Heart right ventricle (tissue), 16 donors: ENCODE measurements at regions of chr19 and their contacts with region 1.

Region 1: DNA sequence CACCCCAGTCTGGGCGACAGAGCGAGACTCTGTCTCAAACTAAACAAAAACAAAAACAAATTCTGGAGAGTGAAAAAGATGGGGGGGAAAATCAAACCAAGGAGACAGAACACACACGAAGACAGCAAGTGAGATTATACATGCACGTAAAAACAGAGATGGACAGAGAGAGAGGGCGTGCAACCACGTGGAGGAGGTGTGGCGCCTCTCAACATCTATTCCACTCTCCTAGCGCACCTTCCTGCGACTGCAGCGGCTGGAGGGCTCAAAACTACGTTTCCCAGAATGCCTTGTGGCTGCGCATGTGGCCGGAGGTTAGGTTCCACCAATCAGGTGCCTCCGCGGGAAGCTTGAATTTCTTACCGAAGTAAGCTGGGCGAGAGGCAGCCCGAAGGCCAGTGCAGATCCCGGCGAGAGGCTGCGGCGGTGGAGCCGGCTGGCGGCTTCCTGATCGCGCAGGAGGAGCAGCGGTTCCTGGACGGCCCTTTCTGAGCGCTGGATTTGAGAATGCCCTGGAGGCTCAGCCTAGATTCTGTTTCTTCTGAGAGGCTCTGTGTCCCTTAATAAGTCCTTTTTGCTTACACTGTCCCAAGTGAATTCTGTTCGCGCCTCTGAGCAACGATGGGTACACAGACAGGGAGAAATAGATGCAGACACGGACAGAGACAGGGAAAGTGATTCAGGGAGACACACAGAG is 13.1 kb upstream of the NANOS2 start:
- DNase-seq: peak; percentile 86 to 90
- ATAC-seq: peak; percentile 82 to 95 (median 94)
- H3K4me3 ChIP-seq: peak overlapping the region in 1 of 10 donors; percentile 24
- H3K27ac ChIP-seq: no peak overlapping the region
- H3K4me1 ChIP-seq: peaks cover 0 to 9% (median 6%) of the 10 kb centered on the region in 9 donors
- H3K27me3 ChIP-seq: peaks cover 0 to 9% (median 0%) of the 10 kb centered on the region in 7 donors
- CTCF ChIP-seq: peak in 4 of 9 donors; percentile 14 to 22 (median 20)

Region 2: DNA sequence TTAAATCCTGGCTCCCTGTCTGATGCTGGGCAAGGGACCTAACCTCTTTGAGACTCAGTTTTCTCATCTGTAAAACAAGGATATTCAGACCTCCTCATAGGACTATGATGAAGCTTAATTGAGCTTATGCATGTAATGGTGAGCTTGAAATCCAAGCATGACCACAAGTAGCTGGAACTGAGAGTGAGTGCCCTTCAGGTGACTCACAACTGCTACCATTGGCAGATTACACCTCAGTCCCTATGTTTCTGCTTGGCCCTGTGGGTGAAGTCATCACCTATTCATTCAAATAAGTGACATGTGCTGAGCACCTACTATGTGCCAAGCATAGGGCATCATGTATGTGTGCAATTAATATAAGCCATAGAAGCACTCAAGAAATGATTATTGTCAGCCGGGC is 20.2 kb after region 1 on chr19:
- intact Hi-C with region 1: no loop called
- DNase-seq: no peak
- ATAC-seq: no peak
- H3K4me3 ChIP-seq: no peak overlapping the region
- H3K27ac ChIP-seq: no peak overlapping the region
- H3K4me1 ChIP-seq: peaks cover 3 to 6% (median 4%) of the 10 kb centered on the region in 9 donors
- H3K27me3 ChIP-seq: peaks cover 0 to 24% (median 0%) of the 10 kb centered on the region in 7 donors
- CTCF ChIP-seq: no peak

Region 3: DNA sequence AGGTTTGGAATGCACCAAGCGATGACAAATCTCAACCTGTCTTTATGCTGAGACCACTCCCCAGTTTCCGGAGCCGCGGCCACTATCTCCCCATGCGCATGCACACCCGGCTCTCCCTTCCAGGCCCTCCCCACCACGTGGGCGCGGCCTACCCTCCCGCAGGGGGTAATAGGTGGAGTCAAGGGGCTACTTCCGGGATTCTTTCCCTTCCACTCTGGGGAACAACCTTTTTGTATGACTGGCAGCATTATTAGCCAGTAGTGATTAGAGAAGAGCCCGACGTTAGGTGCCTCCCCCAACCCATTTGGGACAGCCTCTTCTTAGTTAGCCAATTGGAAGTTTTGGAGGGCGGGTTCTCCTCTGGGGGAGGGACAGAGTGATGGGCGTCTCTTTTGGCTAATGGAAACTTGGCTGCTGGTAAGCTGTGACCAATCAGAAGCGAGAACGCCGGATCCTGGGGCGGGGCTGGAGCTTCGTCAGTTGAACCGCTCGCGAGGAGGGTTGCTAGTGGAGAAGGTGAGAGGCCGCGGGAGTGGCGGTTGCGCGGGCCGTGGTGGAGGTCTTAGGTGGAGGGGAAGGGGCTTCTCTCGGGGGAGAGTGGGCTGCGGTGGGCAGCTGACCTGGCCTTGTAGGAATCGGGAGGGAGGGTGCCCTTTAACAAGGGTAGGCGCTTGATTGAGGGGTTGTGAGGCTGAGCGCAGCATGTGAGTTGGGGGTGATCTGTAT is 67.4 kb after region 1 on chr19 and contains the start of gene CCDC61:
- intact Hi-C with region 1: loop called in 1 of 10 experiments (anchors 5 kb)
- DNase-seq: peak; percentile 90 to 98
- ATAC-seq: peak; percentile 98 to 100 (median 99)
- H3K4me3 ChIP-seq: peak within 1 kb of the TSS; percentile 61 to 94 (median 79)
- H3K27ac ChIP-seq: peak within 1 kb of the TSS in 9 of 10 donors; percentile 3 to 91 (median 81)
- H3K4me1 ChIP-seq: peaks cover 3 to 24% (median 17%) of the 10 kb centered on the region in 9 donors
- H3K27me3 ChIP-seq: peaks cover 0 to 15% (median 0%) of the 10 kb centered on the region in 7 donors
- CTCF ChIP-seq: no peak
- total RNA-seq, gene CCDC61: 6.6 to 10.3 (median 8.3) TPM

Region 4: DNA sequence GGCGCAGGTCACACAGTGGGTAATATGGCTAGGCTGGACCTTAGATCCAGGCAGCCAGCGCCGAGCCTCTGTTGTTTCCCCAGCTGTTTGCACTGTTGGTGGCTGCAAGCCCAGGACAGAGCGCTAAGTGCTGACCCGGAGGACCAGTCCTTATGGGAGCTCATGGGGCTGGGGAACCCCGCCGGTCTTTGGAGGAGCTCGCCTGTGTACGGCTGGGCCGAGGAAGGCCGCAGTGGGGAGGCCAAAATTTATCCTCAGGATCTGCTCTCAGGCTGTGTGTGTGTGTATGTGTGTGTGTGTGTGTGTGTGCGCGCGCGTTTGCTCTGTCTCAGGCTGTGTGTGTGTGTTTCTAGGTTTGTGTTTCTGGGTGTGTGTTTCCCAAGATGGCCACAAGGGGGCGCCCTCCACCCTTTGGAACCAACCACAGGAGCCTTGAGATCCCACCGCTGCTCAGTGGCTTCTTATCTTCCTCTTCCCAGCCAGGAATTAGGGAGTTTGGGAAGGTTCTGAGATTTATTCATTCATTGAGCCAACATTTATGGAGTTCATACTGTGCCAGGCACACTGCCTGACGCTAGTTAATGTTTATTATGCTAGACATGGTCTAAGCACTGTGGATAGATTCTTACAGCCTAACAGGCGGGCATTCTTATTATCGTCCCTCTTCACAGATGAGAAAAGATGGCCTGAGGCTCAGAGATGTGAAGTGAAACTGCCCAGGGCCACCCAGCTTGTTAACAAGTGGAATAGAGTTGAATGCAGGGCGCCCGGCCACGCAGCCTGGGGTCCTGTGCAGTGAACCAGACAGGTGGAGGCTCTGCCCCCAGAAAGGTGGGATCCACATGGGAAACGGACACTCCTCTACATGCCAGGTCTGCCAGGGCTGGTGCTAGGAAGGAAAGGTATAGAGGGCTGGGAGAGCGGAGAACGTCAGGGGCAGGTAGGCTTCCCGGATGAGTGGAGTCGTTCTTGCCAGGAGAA is 82.1 kb after region 1 on chr19:
- intact Hi-C with region 1: loop called in 4 of 10 experiments (anchors 5 to 10 kb)
- DNase-seq: peak; percentile 64 to 65
- ATAC-seq: peak; percentile 60 to 87 (median 80)
- H3K4me3 ChIP-seq: no peak overlapping the region
- H3K27ac ChIP-seq: no peak overlapping the region
- H3K4me1 ChIP-seq: peaks cover 0 to 10% (median 5%) of the 10 kb centered on the region in 9 donors
- H3K27me3 ChIP-seq: peaks cover 0 to 31% (median 21%) of the 10 kb centered on the region in 7 donors
- CTCF ChIP-seq: peak; percentile 79 to 90 (median 85)

Region 5: DNA sequence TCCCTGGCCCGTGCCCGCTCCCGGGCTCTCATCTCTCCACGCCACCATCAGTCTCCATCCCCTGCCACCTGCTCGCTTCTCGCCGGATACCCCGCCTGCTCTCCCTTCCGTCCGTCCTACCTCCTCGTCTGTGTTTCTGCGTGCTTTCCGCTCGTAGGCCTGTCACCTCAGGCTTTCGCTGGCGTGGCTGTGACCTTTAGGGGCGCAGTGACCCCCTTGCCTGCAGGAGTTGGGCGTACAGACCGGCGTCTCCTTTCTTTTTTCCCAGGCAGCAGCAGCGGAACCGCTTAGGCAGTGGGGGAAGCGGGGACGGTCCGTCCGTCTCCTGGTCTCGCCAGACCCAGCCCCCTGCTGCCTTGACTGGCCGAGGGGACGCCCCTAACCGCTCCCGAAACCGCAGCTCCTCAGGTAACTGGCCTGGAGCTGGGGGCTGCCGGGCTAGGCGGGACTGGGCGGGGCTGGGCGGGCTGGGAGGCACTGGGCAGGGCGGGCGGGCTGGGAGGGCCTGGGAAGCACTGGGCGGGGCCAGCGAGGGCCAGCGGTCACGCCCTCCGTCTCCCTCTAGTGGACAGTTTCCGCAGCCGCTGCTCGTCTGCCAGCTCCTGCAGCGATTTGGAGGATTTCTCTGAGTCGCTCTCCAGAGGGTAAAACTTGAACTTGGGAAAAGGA is 88.8 kb after region 1 on chr19:
- intact Hi-C with region 1: loop called in 2 of 10 experiments (anchors 5 to 10 kb)
- DNase-seq: peak; percentile 80 to 84
- ATAC-seq: peak; percentile 78 to 92 (median 89)
- H3K4me3 ChIP-seq: peak overlapping the region; percentile 45 to 81 (median 74)
- H3K27ac ChIP-seq: peak overlapping the region in 3 of 10 donors; percentile 42 to 65 (median 44)
- H3K4me1 ChIP-seq: peaks cover 3 to 24% (median 21%) of the 10 kb centered on the region in 9 donors
- H3K27me3 ChIP-seq: peaks cover 0 to 44% (median 28%) of the 10 kb centered on the region in 7 donors
- CTCF ChIP-seq: peak; percentile 84 to 97 (median 92)